ENCODE measurements at regions of chr20 and their contacts with region 1.

Region 1: GRCh38 chr20:45890985-45891983 is at the starts of genes CTSA and NEURL2:
- DNase-seq: peak; percentile 91
- H3K4me3 Mint-ChIP-seq: peak within 1 kb of the TSS; percentile 89
- H3K27ac Mint-ChIP-seq: peak within 1 kb of the TSS; percentile 84
- H3K4me1 Mint-ChIP-seq: peaks cover 22% of the 10 kb centered on the region
- H3K27me3 Mint-ChIP-seq: no peaks in the 10 kb centered on the region
- total RNA-seq, gene CTSA: 28.7 to 31.5 TPM
- total RNA-seq, gene NEURL2: 0.99 to 1.4 TPM

Region 2: GRCh38 chr20:45823949-45824835 is 67.1 kb before region 1 on chr20:
- CTCF ChIA-PET with region 1: no interaction called
- intact Hi-C with region 1: loop called (anchors 2 kb)
- DNase-seq: peak; percentile 69
- H3K4me3 Mint-ChIP-seq: peak overlapping the region; percentile 67
- H3K27ac Mint-ChIP-seq: no peak overlapping the region
- H3K4me1 Mint-ChIP-seq: peaks cover 13% of the 10 kb centered on the region
- H3K27me3 Mint-ChIP-seq: peaks cover 35% of the 10 kb centered on the region

Region 3: GRCh38 chr20:45833030-45833882 is 58.0 kb before region 1 on chr20 and contains the start of gene SNX21:
- CTCF ChIA-PET with region 1: no interaction called
- intact Hi-C with region 1: loop called (anchors 2 kb)
- DNase-seq: peak; percentile 67
- H3K4me3 Mint-ChIP-seq: peak within 1 kb of the TSS; percentile 75
- H3K27ac Mint-ChIP-seq: no peak within 1 kb of the TSS
- H3K4me1 Mint-ChIP-seq: peaks cover 11% of the 10 kb centered on the region
- H3K27me3 Mint-ChIP-seq: no peaks in the 10 kb centered on the region
- total RNA-seq, gene SNX21: 0.72 to 1.2 TPM

Region 4: DNA sequence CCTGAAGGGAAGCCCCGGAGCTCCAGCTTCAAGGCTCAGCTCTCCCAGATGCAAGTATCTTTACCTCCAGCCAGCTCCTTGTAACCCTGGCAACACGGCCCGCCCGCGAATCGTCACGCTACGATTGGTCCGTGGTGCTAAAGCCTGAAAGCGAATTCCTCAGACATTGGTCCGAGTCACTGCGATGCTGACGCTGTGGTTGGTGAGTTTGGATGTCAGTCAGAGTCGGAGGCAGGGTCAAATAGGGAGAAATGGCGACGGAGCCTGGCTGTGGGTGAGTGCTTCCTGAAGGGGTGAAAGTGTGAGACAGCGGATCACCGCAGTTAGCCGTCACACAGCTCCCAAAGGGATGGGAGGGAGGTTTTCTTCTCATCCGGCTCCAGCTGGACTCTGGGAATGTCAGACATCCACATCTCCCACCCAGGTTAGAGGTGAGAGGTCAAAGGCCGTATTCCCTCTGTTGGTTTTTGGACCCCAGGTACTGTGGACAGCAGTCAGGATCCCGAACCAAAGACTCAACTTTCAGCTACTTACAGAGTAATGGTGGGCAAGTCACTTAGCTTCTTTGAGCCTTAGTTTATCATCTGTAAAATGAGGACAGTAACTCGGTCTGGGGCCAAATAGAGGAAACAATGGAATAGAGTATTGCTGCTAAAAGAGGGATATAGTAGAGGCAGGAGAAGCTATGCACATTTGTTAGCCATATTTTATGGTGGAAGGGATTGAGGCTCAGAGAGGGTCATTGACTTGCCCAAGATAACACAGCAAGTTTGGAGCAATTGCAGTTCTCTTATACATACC is 10.1 kb before region 1 on chr20 and contains the start of gene ZSWIM1:
- CTCF ChIA-PET with region 1: interaction called, 3 read pairs
- intact Hi-C with region 1: loop called (anchors 1 kb)
- DNase-seq: peak; percentile 100
- H3K4me3 Mint-ChIP-seq: peak within 1 kb of the TSS; percentile 94
- H3K27ac Mint-ChIP-seq: peak within 1 kb of the TSS; percentile 93
- H3K4me1 Mint-ChIP-seq: peaks cover 48% of the 10 kb centered on the region
- H3K27me3 Mint-ChIP-seq: no peaks in the 10 kb centered on the region
- total RNA-seq, gene ZSWIM1: 8.2 to 8.4 TPM

Region 5: GRCh38 chr20:45910670-45911485 is 19.6 kb after region 1 on chr20:
- CTCF ChIA-PET with region 1: interaction called, 7 read pairs
- intact Hi-C with region 1: loop called (anchors 1 kb)
- DNase-seq: peak; percentile 97
- H3K4me3 Mint-ChIP-seq: peak overlapping the region; percentile 82
- H3K27ac Mint-ChIP-seq: peak overlapping the region; percentile 25
- H3K4me1 Mint-ChIP-seq: peaks cover 20% of the 10 kb centered on the region
- H3K27me3 Mint-ChIP-seq: peaks cover 16% of the 10 kb centered on the region

Region 6: DNA sequence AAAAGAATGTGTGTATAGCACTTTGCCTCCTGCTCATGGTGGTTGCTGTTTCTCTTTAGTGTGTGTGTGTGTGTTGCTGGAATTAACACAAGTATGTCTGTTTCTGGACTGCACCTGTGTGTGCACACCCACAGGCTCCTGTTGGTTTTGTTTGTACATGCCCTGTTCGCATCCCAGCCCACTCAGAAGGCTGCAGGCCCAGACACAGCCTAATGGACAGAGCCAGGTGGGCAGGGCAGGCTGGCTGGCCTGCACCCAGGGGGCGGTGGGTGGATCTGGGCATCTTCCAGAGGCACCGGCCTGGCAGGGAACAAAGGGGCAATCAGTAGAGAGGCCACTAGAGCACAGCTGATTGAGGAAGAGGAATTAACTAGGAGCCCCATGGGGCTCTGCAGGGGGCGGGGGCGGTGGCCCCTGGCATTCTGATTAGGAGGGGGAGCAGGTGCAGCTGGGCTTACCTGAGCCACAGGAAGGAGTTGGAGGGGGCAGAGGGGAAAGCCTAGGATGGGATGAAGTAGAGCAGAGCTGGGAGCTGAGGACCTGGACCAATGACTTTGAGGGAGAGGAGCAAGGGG is 248.7 kb after region 1 on chr20:
- CTCF ChIA-PET with region 1: no interaction called
- intact Hi-C with region 1: no loop called
- DNase-seq: no peak
- H3K4me3 Mint-ChIP-seq: no peak overlapping the region
- H3K27ac Mint-ChIP-seq: no peak overlapping the region
- H3K4me1 Mint-ChIP-seq: no peaks in the 10 kb centered on the region
- H3K27me3 Mint-ChIP-seq: peaks cover 20% of the 10 kb centered on the region